Mammary epithelial cell (primary cell): ENCODE measurements at regions of chr16 and their contacts with region 1.

Region 1: GRCh38 chr16:12613131-12613991 is 190.3 kb downstream of the CPPED1 start:
- DNase-seq: peak; percentile 94
- H3K4me3 ChIP-seq: no peak overlapping the region
- H3K27ac ChIP-seq: peak overlapping the region; percentile 30
- H3K4me1 ChIP-seq: peaks cover 6% of the 10 kb centered on the region
- H3K27me3 ChIP-seq: no peaks in the 10 kb centered on the region
- CTCF ChIP-seq: no peak

Region 2: GRCh38 chr16:12311309-12311708 is 302.1 kb before region 1 on chr16:
- CTCF ChIA-PET with region 1: no interaction called
- dilution Hi-C with region 1: no loop called
- in situ Hi-C with region 1: no loop called
- intact Hi-C with region 1: no loop called
- DNase-seq: no peak
- H3K4me3 ChIP-seq: no peak overlapping the region
- H3K27ac ChIP-seq: no peak overlapping the region
- H3K4me1 ChIP-seq: no peaks in the 10 kb centered on the region
- H3K27me3 ChIP-seq: no peaks in the 10 kb centered on the region
- CTCF ChIP-seq: no peak

Region 3: GRCh38 chr16:12580809-12581208 is 32.6 kb before region 1 on chr16:
- CTCF ChIA-PET with region 1: no interaction called
- dilution Hi-C with region 1: no loop called
- in situ Hi-C with region 1: no loop called
- intact Hi-C with region 1: no loop called
- DNase-seq: peak; percentile 55
- H3K4me3 ChIP-seq: no peak overlapping the region
- H3K27ac ChIP-seq: no peak overlapping the region
- H3K4me1 ChIP-seq: no peaks in the 10 kb centered on the region
- H3K27me3 ChIP-seq: no peaks in the 10 kb centered on the region
- CTCF ChIP-seq: no peak

Region 4: GRCh38 chr16:12625068-12625467 is 11.7 kb after region 1 on chr16:
- CTCF ChIA-PET with region 1: no interaction called
- dilution Hi-C with region 1: no loop called
- in situ Hi-C with region 1: no loop called
- intact Hi-C with region 1: no loop called
- DNase-seq: no peak
- H3K4me3 ChIP-seq: no peak overlapping the region
- H3K27ac ChIP-seq: no peak overlapping the region
- H3K4me1 ChIP-seq: no peaks in the 10 kb centered on the region
- H3K27me3 ChIP-seq: no peaks in the 10 kb centered on the region
- CTCF ChIP-seq: no peak

Region 5: GRCh38 chr16:12803203-12804097 is 190.1 kb after region 1 on chr16 and contains the start of gene CPPED1:
- CTCF ChIA-PET with region 1: no interaction called
- dilution Hi-C with region 1: no loop called
- in situ Hi-C with region 1: no loop called
- intact Hi-C with region 1: loop called (anchors 10 kb)
- DNase-seq: peak; percentile 94
- H3K4me3 ChIP-seq: peak within 1 kb of the TSS; percentile 46 to 82 (median 73)
- H3K27ac ChIP-seq: peak within 1 kb of the TSS; percentile 45
- H3K4me1 ChIP-seq: peaks cover 9% of the 10 kb centered on the region
- H3K27me3 ChIP-seq: no peaks in the 10 kb centered on the region
- CTCF ChIP-seq: no peak
- total RNA-seq, gene CPPED1: 12.8 to 19.9 TPM